ENCODE measurements at regions of chr1 and their contacts with region 1.

Region 1: DNA sequence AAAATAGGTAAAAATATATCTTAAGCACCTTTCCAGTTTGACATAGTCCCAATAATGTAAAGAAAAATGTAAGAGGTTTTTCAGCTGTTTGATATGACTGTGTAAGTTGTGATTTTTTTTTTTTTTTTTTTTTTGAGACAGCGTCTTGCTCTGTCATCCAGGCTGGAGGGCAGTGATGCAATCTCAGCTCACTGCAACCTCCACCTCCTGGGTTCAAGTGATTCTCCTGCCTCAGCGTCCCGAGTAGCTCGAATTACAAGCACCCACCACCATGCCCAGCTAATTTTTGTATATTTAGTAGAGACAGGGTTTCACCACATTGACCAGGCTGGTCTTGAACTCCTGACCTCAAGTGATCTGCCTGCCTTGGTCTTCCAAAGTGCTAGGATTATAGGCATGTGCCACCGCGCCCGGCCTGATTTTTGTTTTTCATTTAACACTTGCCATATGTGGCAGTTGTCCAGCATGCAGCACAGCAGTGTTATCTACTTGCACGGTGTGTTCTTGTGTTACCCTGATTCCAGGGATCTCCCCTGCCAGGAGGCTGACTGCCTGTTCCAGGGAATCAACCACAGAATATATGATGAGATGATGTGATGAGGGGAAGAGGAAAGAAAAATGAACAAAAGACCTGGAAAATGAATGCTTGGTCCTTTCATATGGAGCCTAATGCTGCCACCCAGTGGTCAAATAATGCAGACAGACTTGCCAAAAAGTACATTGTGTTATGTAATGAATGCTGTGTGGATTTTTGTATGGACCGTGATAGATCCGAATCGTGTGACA is 79.0 kb downstream of the RAVER2 start:
- DNase-seq: peak; percentile 28 to 82 (median 50)
- ATAC-seq: peak; percentile 65
- H3K4me3 ChIP-seq: no peak overlapping the region
- H3K4me3 Mint-ChIP-seq: peak overlapping the region; percentile 3
- H3K27ac ChIP-seq: no peak overlapping the region
- H3K27ac Mint-ChIP-seq: no peak overlapping the region
- H3K4me1 ChIP-seq: peaks cover 19% of the 10 kb centered on the region
- H3K4me1 Mint-ChIP-seq: peaks cover 28% of the 10 kb centered on the region
- H3K27me3 ChIP-seq: no peaks in the 10 kb centered on the region
- H3K27me3 Mint-ChIP-seq: no peaks in the 10 kb centered on the region
- CTCF ChIP-seq: peak; percentile 82

Region 2: DNA sequence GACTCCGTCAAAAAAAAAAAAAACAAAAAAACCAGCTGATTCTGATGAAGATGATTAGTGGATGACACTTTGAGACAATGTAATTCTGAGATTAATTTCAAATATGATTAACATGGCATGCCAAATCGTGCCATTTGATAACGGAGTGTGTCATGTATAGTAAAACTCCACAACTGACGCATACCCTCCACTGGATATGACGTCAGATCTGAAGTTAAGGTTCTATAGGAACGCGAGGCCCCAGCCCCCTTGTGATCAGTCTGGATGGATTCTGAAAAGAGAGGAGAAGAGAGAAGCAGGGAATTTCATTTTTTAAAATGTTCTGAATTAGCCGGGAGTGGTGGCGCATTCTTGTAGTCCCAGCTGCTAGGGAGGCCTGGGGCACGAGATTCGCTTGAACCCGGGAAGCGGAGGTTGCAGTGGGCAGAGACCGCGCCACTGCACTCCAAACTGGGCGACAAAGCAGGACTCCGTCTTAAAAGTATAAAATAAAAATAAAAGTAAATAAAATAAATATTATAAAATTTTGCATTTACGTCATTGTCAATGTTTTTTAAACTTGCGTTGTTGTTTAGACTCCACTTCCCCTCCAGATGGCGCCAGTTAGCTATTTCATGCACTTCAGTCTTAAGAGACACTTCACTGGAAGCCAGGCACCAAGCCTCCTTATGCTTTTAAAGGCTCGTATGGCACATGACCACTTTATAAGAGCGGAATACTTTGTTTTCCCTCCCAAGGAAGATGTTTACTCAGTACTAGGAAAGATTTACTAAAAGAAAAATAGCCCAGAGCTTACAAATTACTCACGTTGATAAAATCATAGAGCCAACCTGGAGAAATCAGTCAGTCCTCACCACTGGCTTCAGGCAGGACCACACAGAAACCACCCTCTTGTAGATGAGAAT is 555.0 kb before region 1 on chr1:
- CTCF ChIA-PET with region 1: interaction called, 3 read pairs
- POLR2A ChIA-PET with region 1: no interaction called
- intact Hi-C with region 1: loop called (anchors 1 kb)
- DNase-seq: peak; percentile 19 to 83 (median 56)
- ATAC-seq: peak; percentile 71
- H3K4me3 ChIP-seq: no peak overlapping the region
- H3K4me3 Mint-ChIP-seq: no peak overlapping the region
- H3K27ac ChIP-seq: no peak overlapping the region
- H3K27ac Mint-ChIP-seq: no peak overlapping the region
- H3K4me1 ChIP-seq: no peaks in the 10 kb centered on the region
- H3K4me1 Mint-ChIP-seq: no peaks in the 10 kb centered on the region
- H3K27me3 ChIP-seq: peaks cover 0 to 10% of the 10 kb centered on the region in 2 experiments
- H3K27me3 Mint-ChIP-seq: peaks cover 45% of the 10 kb centered on the region
- CTCF ChIP-seq: peak; percentile 84

Region 3: DNA sequence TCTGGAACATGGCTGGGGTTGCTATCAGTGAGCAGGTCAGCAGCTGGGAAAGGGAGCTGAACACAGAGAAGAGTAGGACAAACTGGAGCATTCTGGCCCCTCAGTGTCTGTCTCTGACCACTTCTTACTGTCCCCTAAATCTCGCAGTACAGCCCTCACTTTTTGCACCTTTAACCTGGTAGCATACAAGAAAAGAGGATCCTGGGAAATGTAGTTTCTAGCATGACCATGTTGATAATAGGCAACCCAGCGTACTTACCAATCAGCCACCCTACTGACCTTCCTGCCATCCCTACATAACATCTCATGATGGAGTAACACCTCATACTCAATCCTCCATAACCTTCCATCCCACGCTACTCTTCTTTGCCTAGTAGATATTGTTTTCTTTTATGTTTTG is 178.1 kb before region 1 on chr1:
- CTCF ChIA-PET with region 1: no interaction called
- POLR2A ChIA-PET with region 1: no interaction called
- intact Hi-C with region 1: no loop called
- DNase-seq: no peak
- ATAC-seq: no peak
- H3K4me3 ChIP-seq: no peak overlapping the region
- H3K4me3 Mint-ChIP-seq: no peak overlapping the region
- H3K27ac ChIP-seq: no peak overlapping the region
- H3K27ac Mint-ChIP-seq: no peak overlapping the region
- H3K4me1 ChIP-seq: no peaks in the 10 kb centered on the region
- H3K4me1 Mint-ChIP-seq: no peaks in the 10 kb centered on the region
- H3K27me3 ChIP-seq: no peaks in the 10 kb centered on the region
- H3K27me3 Mint-ChIP-seq: no peaks in the 10 kb centered on the region
- CTCF ChIP-seq: no peak

Region 4: GRCh38 chr1:64686828-64687724 is 136.8 kb before region 1 on chr1:
- CTCF ChIA-PET with region 1: interaction called, 4 read pairs
- POLR2A ChIA-PET with region 1: interaction called, 5 read pairs
- intact Hi-C with region 1: loop called (anchors 1 kb)
- DNase-seq: peak in 8 of 14 experiments; percentile 2 to 67 (median 30)
- ATAC-seq: peak; percentile 90
- H3K4me3 ChIP-seq: no peak overlapping the region
- H3K4me3 Mint-ChIP-seq: no peak overlapping the region
- H3K27ac ChIP-seq: no peak overlapping the region
- H3K27ac Mint-ChIP-seq: no peak overlapping the region
- H3K4me1 ChIP-seq: no peaks in the 10 kb centered on the region
- H3K4me1 Mint-ChIP-seq: no peaks in the 10 kb centered on the region
- H3K27me3 ChIP-seq: no peaks in the 10 kb centered on the region
- H3K27me3 Mint-ChIP-seq: no peaks in the 10 kb centered on the region
- CTCF ChIP-seq: peak; percentile 77

Region 5: GRCh38 chr1:64744492-64745180 is 79.2 kb before region 1 on chr1 and contains the start of gene RAVER2:
- CTCF ChIA-PET with region 1: interaction called, 6 read pairs
- POLR2A ChIA-PET with region 1: interaction called, 3 read pairs
- intact Hi-C with region 1: loop called (anchors 1 to 2 kb)
- DNase-seq: peak; percentile 14 to 82 (median 46)
- ATAC-seq: peak; percentile 84
- H3K4me3 ChIP-seq: peak within 1 kb of the TSS; percentile 58
- H3K4me3 Mint-ChIP-seq: peak within 1 kb of the TSS; percentile 98
- H3K27ac ChIP-seq: peak within 1 kb of the TSS in 1 of 2 donors; percentile 17
- H3K27ac Mint-ChIP-seq: peak within 1 kb of the TSS; percentile 69
- H3K4me1 ChIP-seq: peaks cover 15% of the 10 kb centered on the region
- H3K4me1 Mint-ChIP-seq: peaks cover 24% of the 10 kb centered on the region
- H3K27me3 ChIP-seq: no peaks in the 10 kb centered on the region
- H3K27me3 Mint-ChIP-seq: peaks cover 5% of the 10 kb centered on the region
- CTCF ChIP-seq: peak; percentile 24
- total RNA-seq, gene RAVER2: 0.80 to 1.0 TPM

Region 6: DNA sequence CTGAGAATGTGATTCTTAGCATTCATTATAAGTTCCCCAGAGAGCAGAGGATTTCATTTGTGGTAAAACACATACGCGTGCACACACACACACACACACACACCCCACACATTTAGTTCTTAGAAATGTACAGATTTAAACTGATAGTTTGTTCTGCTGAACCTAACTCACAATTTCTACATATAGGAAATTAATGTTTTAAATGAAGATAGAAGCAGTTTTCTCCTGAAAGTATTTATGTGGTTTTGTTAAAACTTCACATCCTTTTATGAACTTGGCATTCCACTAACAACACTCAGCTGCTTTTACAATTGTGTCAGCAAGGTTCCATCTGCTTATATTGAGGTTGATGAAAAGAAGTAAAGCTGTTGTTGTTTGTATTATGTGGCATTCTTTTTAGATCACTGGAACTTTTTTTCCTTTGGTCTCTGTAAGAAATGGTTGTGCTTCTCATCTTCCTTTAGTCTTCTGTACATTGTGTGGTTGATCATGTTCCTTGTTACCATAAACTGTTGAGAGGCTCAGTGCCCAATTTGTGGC is 365.8 kb after region 1 on chr1:
- CTCF ChIA-PET with region 1: no interaction called
- POLR2A ChIA-PET with region 1: no interaction called
- intact Hi-C with region 1: no loop called
- DNase-seq: no peak
- ATAC-seq: no peak
- H3K4me3 ChIP-seq: no peak overlapping the region
- H3K4me3 Mint-ChIP-seq: no peak overlapping the region
- H3K27ac ChIP-seq: no peak overlapping the region
- H3K27ac Mint-ChIP-seq: no peak overlapping the region
- H3K4me1 ChIP-seq: no peaks in the 10 kb centered on the region
- H3K4me1 Mint-ChIP-seq: no peaks in the 10 kb centered on the region
- H3K27me3 ChIP-seq: no peaks in the 10 kb centered on the region
- H3K27me3 Mint-ChIP-seq: no peaks in the 10 kb centered on the region
- CTCF ChIP-seq: no peak

Region 7: DNA sequence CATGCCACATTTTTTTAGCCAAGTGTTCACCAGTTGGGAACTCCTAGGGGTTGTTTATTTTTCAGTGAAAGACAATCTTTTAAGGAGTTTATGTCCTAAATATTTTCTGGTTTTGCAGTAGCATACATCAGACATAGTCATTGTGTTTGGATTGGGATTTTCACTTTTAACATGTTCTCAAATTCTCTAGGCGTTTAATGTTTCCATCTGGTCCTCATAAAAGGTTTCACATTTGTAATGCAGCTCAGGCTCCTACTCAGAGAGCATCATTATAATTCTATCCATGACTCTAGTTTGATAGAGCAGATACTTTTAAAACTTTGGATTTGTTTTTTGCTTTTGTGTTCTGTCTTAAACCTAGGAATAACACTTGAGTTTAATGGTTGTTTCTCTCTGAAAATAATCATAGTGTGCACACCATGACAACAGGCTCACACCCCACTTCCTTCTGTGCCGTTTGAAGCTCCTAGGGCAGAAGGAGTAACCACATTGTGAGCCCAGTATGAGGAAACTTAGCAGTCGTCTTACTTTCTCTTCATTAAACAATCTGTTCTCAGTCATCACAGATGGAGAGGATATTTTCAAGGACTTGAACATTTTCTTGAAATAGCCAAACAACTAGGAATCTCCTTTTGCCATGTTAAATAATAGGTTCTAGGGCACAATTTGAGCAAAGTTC is 1188.4 kb after region 1 on chr1:
- CTCF ChIA-PET with region 1: no interaction called
- POLR2A ChIA-PET with region 1: no interaction called
- intact Hi-C with region 1: no loop called
- DNase-seq: peak in 3 of 14 experiments; percentile 4 to 9 (median 7)
- ATAC-seq: no peak
- H3K4me3 ChIP-seq: no peak overlapping the region
- H3K4me3 Mint-ChIP-seq: no peak overlapping the region
- H3K27ac ChIP-seq: no peak overlapping the region
- H3K27ac Mint-ChIP-seq: no peak overlapping the region
- H3K4me1 ChIP-seq: no peaks in the 10 kb centered on the region
- H3K4me1 Mint-ChIP-seq: peaks cover 11% of the 10 kb centered on the region
- H3K27me3 ChIP-seq: no peaks in the 10 kb centered on the region
- H3K27me3 Mint-ChIP-seq: no peaks in the 10 kb centered on the region
- CTCF ChIP-seq: no peak